CD4-positive, alpha-beta T cell (primary cell): ENCODE measurements at regions of chr6 and their contacts with region 1.

Region 1: GRCh38 chr6:31197559-31198305 is 27.2 kb upstream of the POU5F1 start:
- DNase-seq: peak; percentile 91 to 98 (median 92)
- ATAC-seq: peak; percentile 76
- H3K4me3 ChIP-seq: peak overlapping the region; percentile 71
- H3K4me3 Mint-ChIP-seq: peak overlapping the region; percentile 97
- H3K27ac ChIP-seq: peak overlapping the region; percentile 97 to 100
- H3K27ac Mint-ChIP-seq: peak overlapping the region; percentile 93
- H3K4me1 ChIP-seq: peaks cover 60% of the 10 kb centered on the region
- H3K4me1 Mint-ChIP-seq: peaks cover 65% of the 10 kb centered on the region
- H3K27me3 ChIP-seq: no peaks in the 10 kb centered on the region
- H3K27me3 Mint-ChIP-seq: no peaks in the 10 kb centered on the region
- CTCF ChIP-seq: no peak

Region 2: DNA sequence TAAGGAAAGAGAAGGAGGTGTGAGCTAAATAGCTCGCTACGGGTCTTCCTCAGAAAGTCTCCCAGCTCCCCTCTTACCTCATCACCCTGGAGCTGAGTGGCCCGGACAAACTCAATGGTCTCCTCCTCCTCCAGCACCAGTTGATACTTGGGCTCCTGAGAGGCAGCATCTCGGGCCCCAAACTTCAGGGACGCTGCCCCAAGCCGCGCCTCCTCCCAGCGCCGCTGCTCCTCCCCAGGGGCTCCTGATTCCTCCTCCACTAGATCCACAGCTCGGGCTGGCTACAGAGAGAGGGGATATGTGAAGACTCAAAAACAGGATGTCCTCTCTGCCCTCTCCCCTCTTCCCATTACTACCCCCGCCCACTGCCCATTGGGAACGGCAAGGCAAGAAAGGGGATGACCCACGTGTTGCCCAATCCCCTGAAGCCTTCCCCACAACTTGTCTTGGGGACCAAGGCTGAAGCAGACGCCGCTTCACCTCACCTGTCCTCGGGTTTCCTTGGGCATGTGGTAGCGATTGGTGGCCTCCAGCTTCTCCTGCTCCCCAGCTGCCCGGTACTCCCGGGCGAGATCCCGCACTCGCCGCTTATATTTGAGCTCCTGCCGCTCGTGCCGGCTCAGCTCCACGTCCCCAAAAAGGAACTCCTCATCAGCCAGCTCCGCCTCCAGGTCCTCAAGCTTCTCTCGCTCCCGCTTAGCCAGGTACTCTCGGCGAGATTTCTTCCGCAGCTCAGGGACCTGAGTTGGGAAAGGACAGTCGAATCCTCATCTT is 532.6 kb before region 1 on chr6:
- CTCF ChIA-PET with region 1: no interaction called
- POLR2A ChIA-PET with region 1: no interaction called
- intact Hi-C with region 1: no loop called
- DNase-seq: no peak
- ATAC-seq: no peak
- H3K4me3 ChIP-seq: no peak overlapping the region
- H3K4me3 Mint-ChIP-seq: no peak overlapping the region
- H3K27ac ChIP-seq: no peak overlapping the region
- H3K27ac Mint-ChIP-seq: no peak overlapping the region
- H3K4me1 ChIP-seq: no peaks in the 10 kb centered on the region
- H3K4me1 Mint-ChIP-seq: peaks cover 12% of the 10 kb centered on the region
- H3K27me3 ChIP-seq: no peaks in the 10 kb centered on the region
- H3K27me3 Mint-ChIP-seq: no peaks in the 10 kb centered on the region
- CTCF ChIP-seq: no peak

Region 3: GRCh38 chr6:31210123-31210522 is 12.4 kb after region 1 on chr6:
- CTCF ChIA-PET with region 1: interaction called, 5 read pairs
- POLR2A ChIA-PET with region 1: interaction called, 17 read pairs
- intact Hi-C with region 1: no loop called
- DNase-seq: no peak
- ATAC-seq: no peak
- H3K4me3 ChIP-seq: no peak overlapping the region
- H3K4me3 Mint-ChIP-seq: no peak overlapping the region
- H3K27ac ChIP-seq: no peak overlapping the region
- H3K27ac Mint-ChIP-seq: no peak overlapping the region
- H3K4me1 ChIP-seq: peaks cover 8% of the 10 kb centered on the region
- H3K4me1 Mint-ChIP-seq: peaks cover 7% of the 10 kb centered on the region
- H3K27me3 ChIP-seq: no peaks in the 10 kb centered on the region
- H3K27me3 Mint-ChIP-seq: no peaks in the 10 kb centered on the region
- CTCF ChIP-seq: no peak

Region 4: GRCh38 chr6:31271641-31272357 is 74.1 kb after region 1 on chr6 and contains the start of gene HLA-C:
- CTCF ChIA-PET with region 1: interaction called, 8 read pairs
- POLR2A ChIA-PET with region 1: interaction called, 97 read pairs
- intact Hi-C with region 1: loop called (anchors 1 kb)
- DNase-seq: peak; percentile 80 to 98 (median 89)
- ATAC-seq: peak; percentile 89
- H3K4me3 ChIP-seq: peak within 1 kb of the TSS; percentile 79
- H3K4me3 Mint-ChIP-seq: peak within 1 kb of the TSS; percentile 98
- H3K27ac ChIP-seq: peak within 1 kb of the TSS; percentile 96 to 98
- H3K27ac Mint-ChIP-seq: peak within 1 kb of the TSS; percentile 100
- H3K4me1 ChIP-seq: peaks cover 54% of the 10 kb centered on the region
- H3K4me1 Mint-ChIP-seq: peaks cover 65% of the 10 kb centered on the region
- H3K27me3 ChIP-seq: no peaks in the 10 kb centered on the region
- H3K27me3 Mint-ChIP-seq: no peaks in the 10 kb centered on the region
- CTCF ChIP-seq: no peak
- total RNA-seq, gene HLA-C: 1,977 to 1,996 TPM

Region 5: DNA sequence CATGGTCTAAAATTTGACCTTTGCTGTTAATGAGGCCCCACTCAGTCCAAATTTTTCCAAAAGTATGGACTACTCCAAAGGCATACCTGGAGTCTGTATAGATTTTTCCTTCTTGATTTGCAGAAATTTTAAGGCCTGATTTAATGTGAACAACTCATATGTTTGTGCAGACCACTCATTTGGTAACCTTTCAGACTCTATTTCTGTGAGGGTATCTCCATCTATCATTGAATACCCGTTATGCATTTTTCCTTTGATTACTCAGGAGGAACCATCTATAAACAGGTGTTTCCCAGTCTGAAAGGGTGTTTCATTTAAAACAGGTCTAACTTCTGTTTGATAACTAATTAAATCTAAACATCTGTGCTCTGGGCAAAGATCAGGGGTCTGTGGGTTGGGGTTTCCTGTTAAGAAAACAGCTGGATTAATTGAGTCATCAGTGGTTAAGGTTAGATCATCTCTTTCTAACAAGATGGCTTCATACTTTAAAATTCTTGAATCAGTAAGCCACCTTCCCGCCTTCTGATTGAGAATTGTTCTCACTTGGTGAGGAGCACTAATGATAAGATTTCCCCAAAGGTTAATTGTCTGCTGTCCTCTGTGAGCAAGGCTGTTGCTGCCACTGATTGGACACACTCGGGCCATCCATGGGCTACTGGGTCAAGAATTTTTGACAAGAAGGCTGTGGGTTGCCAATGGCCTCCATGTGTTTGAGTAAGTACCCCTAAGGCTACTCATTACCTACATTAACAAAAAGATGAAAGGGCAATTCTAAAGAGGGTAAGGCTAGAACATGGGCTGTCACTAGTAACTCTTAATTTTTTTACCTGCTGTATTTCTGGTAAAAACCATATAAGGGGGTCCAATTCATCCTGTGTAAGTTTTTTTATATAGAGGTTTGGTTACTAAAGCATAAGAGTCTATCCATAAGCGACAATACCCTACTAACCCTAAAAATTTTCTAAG is 135.2 kb after region 1 on chr6:
- CTCF ChIA-PET with region 1: no interaction called
- POLR2A ChIA-PET with region 1: interaction called, 5 read pairs
- intact Hi-C with region 1: loop called in 1 of 2 experiments (anchors 1 kb)
- DNase-seq: peak in 6 of 14 experiments; percentile 8 to 80 (median 46)
- ATAC-seq: peak; percentile 88
- H3K4me3 ChIP-seq: no peak overlapping the region
- H3K4me3 Mint-ChIP-seq: peak overlapping the region; percentile 0
- H3K27ac ChIP-seq: no peak overlapping the region
- H3K27ac Mint-ChIP-seq: peak overlapping the region; percentile 16
- H3K4me1 ChIP-seq: peaks cover 3% of the 10 kb centered on the region
- H3K4me1 Mint-ChIP-seq: peaks cover 19% of the 10 kb centered on the region
- H3K27me3 ChIP-seq: no peaks in the 10 kb centered on the region
- H3K27me3 Mint-ChIP-seq: no peaks in the 10 kb centered on the region
- CTCF ChIP-seq: no peak

Region 6: DNA sequence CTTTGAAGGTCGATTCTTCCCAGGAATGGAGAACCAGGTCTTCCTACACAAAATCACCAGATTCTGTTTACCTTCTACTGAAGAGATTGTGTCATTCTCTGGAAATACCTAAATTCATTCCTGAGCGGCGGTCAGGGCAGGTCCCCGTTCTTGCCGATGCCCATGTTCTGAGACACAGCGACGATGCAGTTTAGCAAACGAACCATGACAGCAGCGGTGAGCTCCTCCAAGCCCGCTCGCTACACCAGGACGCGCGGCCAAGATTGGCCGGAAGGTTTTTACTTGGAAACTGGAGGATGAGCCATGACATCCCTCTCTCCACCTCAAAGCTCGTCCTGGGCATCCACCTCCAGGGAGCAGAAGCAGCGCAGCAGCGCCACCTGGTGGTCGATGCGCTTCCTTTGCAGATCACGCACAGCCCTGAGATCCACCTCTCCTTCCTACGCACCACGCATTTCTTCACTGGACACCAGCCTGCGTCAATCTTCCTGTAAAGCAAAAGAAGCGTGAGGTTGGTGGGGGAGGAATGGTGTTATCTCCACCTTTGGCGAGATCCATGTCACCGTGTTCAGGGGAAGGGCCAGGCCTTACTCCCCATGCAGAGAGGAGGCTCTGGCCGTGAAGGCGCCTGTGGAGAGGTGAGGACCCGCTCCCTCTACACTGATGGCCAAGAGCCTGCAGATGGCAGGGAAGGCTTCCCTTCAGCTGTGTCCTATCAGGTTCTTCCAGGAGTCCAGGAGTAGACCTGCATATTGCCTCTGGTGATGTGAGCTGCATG is 169.2 kb after region 1 on chr6:
- CTCF ChIA-PET with region 1: interaction called, 97 read pairs
- POLR2A ChIA-PET with region 1: interaction called, 101 read pairs
- intact Hi-C with region 1: loop called (anchors 1 kb)
- DNase-seq: peak; percentile 72 to 96 (median 88)
- ATAC-seq: peak; percentile 97
- H3K4me3 ChIP-seq: peak overlapping the region; percentile 59
- H3K4me3 Mint-ChIP-seq: peak overlapping the region; percentile 81
- H3K27ac ChIP-seq: no peak overlapping the region
- H3K27ac Mint-ChIP-seq: peak overlapping the region; percentile 38
- H3K4me1 ChIP-seq: peaks cover 9% of the 10 kb centered on the region
- H3K4me1 Mint-ChIP-seq: peaks cover 16% of the 10 kb centered on the region
- H3K27me3 ChIP-seq: no peaks in the 10 kb centered on the region
- H3K27me3 Mint-ChIP-seq: peaks cover 32% of the 10 kb centered on the region
- CTCF ChIP-seq: peak; percentile 84

Region 7: GRCh38 chr6:31493875-31494694 is 296.4 kb after region 1 on chr6:
- CTCF ChIA-PET with region 1: no interaction called
- POLR2A ChIA-PET with region 1: no interaction called
- intact Hi-C with region 1: no loop called
- DNase-seq: peak; percentile 51 to 91 (median 74)
- ATAC-seq: peak; percentile 39
- H3K4me3 ChIP-seq: peak overlapping the region; percentile 88
- H3K4me3 Mint-ChIP-seq: peak overlapping the region; percentile 58
- H3K27ac ChIP-seq: peak overlapping the region; percentile 65 to 68
- H3K27ac Mint-ChIP-seq: peak overlapping the region; percentile 83
- H3K4me1 ChIP-seq: peaks cover 69% of the 10 kb centered on the region
- H3K4me1 Mint-ChIP-seq: peaks cover 57% of the 10 kb centered on the region
- H3K27me3 ChIP-seq: no peaks in the 10 kb centered on the region
- H3K27me3 Mint-ChIP-seq: no peaks in the 10 kb centered on the region
- CTCF ChIP-seq: peak; percentile 80